ENCODE measurements at regions of chr2 and their contacts with region 1.

Region 1: DNA sequence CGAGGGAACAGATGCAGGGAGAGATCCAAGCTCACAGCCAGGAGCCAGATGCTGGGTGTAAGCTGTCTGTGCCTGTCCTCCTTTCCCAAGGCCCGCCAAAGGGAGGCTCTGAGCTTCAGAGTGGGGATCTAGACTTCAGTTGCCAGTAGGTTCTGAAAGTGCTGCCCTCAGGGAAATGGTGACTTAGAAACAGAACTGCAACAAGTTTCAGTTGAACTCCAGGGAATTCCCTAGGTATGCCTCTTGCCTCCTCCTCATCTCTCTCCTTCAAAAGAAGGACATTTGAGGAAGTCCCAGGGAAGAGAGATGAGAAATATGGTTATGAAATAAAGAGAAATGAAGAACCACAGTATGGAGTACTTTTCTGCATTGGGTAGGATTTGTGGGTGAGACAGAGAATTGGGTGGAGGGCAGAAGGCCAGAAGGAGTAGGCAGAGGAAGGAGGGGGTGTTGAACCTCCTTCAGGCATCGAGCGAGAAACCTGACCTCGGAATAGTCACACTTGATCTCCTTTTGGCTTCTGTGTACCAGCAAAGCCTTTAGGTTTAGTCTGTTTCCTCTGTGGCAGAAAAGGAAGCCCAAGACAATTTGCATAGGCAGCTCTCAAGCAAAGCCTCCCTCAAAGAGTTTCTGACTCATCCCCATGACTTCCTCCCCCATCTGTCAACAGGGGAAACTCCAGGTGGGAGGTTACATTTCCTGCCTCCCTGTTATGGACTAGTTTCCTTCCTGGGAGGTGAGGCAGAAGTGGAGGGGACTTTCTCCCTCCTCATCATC is 45.7 kb downstream of the QPCT start:
- DNase-seq: peak; percentile 91
- H3K4me3 Mint-ChIP-seq: peak overlapping the region; percentile 53
- H3K27ac Mint-ChIP-seq: peak overlapping the region; percentile 92
- H3K4me1 Mint-ChIP-seq: peaks cover 19% of the 10 kb centered on the region
- H3K27me3 Mint-ChIP-seq: peaks cover 8% of the 10 kb centered on the region

Region 2: DNA sequence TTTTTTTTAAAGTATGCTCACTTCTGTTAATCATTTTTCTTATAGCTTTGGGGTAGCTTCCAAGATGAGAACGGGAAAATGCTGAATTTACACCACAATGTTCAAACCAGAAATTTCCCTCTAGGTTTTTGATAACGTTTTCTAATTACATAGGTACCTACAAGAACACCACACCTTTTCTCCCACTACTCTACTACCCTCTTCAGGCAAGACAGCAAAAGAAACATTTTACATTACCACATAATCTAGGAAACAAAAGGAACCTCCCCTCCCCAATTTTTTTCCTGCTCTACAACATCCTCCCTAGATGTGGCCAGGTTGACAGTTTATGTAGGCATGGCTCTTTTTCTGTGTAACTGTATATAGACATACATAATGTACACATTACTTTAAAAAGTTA is 126.3 kb before region 1 on chr2:
- intact Hi-C with region 1: no loop called
- DNase-seq: no peak
- H3K4me3 Mint-ChIP-seq: no peak overlapping the region
- H3K27ac Mint-ChIP-seq: no peak overlapping the region
- H3K4me1 Mint-ChIP-seq: peaks cover 4% of the 10 kb centered on the region
- H3K27me3 Mint-ChIP-seq: no peaks in the 10 kb centered on the region

Region 3: GRCh38 chr2:37344453-37345361 is 45.5 kb before region 1 on chr2 and contains the start of gene QPCT:
- intact Hi-C with region 1: no loop called
- DNase-seq: peak; percentile 79
- H3K4me3 Mint-ChIP-seq: peak within 1 kb of the TSS; percentile 83
- H3K27ac Mint-ChIP-seq: no peak within 1 kb of the TSS
- H3K4me1 Mint-ChIP-seq: peaks cover 22% of the 10 kb centered on the region
- H3K27me3 Mint-ChIP-seq: peaks cover 82% of the 10 kb centered on the region
- total RNA-seq, gene QPCT: 2.0 and 2.1 TPM in 2 replicates

Region 4: DNA sequence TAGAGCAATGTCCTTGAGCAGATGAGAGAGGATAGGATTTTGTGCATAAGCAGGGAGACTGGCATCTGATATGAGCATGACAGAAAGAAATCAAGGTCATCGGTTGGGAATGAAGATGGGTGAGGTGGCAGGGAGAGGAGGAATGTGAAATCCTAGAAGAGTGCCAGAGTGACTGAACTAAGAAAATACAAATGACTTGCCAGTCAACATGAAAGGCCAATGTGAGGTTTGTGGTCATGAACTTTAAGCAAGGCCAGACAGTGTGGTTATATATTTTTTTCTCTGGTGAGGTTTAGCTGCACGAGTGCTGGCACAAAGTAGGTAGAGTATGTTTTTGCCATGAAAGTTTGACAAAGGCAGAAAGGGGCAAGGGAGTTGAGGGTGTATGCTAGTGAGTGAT is 24.5 kb before region 1 on chr2:
- intact Hi-C with region 1: loop called (anchors 1 kb)
- DNase-seq: peak; percentile 61
- H3K4me3 Mint-ChIP-seq: no peak overlapping the region
- H3K27ac Mint-ChIP-seq: no peak overlapping the region
- H3K4me1 Mint-ChIP-seq: peaks cover 13% of the 10 kb centered on the region
- H3K27me3 Mint-ChIP-seq: peaks cover 33% of the 10 kb centered on the region

Region 5: GRCh38 chr2:37635504-37636380 is 245.6 kb after region 1 on chr2:
- intact Hi-C with region 1: loop called (anchors 1 kb)
- DNase-seq: peak; percentile 89
- H3K4me3 Mint-ChIP-seq: peak overlapping the region; percentile 46
- H3K27ac Mint-ChIP-seq: peak overlapping the region; percentile 83
- H3K4me1 Mint-ChIP-seq: peaks cover 31% of the 10 kb centered on the region
- H3K27me3 Mint-ChIP-seq: peaks cover 13% of the 10 kb centered on the region

Region 6: GRCh38 chr2:38264396-38265281 is 874.5 kb after region 1 on chr2:
- intact Hi-C with region 1: loop called (anchors 5 kb)
- DNase-seq: no peak
- H3K4me3 Mint-ChIP-seq: no peak overlapping the region
- H3K27ac Mint-ChIP-seq: no peak overlapping the region
- H3K4me1 Mint-ChIP-seq: peaks cover 43% of the 10 kb centered on the region
- H3K27me3 Mint-ChIP-seq: peaks cover 9% of the 10 kb centered on the region

Region 7: DNA sequence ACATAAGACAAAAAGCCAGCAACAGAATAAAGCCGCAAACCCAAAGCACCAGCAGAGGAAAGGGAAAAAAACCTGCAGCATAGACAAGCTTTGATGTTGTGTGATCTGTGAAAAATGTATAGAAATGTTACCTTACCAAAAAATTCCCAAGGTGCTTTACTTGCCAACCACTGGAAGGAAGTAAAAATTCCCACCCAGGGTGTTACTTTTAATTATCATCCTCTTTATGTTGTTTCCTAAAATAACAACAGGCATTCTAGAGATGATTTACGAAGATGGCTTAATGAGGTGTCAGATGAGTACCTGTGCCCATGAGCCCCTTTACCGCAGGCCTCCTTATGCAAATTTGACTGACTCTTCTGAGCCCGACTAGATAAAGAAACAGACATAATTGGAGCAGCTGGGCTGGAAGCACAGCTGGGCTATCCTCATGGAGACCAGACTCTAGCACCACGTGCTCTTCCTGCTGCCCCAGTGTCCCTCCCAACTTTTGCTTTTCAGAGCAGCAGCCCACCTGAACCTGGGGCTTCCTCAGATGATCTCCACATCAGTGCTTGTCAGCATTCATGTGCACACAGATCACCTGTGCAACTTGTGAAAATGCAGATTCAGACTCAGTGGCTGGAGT is 1319.5 kb after region 1 on chr2:
- intact Hi-C with region 1: no loop called
- DNase-seq: peak; percentile 82
- H3K4me3 Mint-ChIP-seq: peak overlapping the region; percentile 72
- H3K27ac Mint-ChIP-seq: peak overlapping the region; percentile 86
- H3K4me1 Mint-ChIP-seq: peaks cover 67% of the 10 kb centered on the region
- H3K27me3 Mint-ChIP-seq: no peaks in the 10 kb centered on the region

Measured in activated CD4-positive, alpha-beta T cell treated with anti-CD3 and anti-CD28 coated beads, Interleukin-2, amount 10 ng/mL, durations not matched to agents 24 days and 14 days (primary cell).